Right ventricle myocardium inferior (tissue), 1 donor: ENCODE measurements at regions of chr11 and their contacts with region 1.

Region 1: GRCh38 chr11:1505480-1505879 is 18.9 kb upstream of the MOB2 start:
- DNase-seq: peak; percentile 18
- ATAC-seq: no peak

Region 2: GRCh38 chr11:1276041-1276790 is 229.3 kb before region 1 on chr11:
- intact Hi-C with region 1: loop called (anchors 5 kb)
- DNase-seq: peak; percentile 58
- ATAC-seq: peak; percentile 58

Region 3: DNA sequence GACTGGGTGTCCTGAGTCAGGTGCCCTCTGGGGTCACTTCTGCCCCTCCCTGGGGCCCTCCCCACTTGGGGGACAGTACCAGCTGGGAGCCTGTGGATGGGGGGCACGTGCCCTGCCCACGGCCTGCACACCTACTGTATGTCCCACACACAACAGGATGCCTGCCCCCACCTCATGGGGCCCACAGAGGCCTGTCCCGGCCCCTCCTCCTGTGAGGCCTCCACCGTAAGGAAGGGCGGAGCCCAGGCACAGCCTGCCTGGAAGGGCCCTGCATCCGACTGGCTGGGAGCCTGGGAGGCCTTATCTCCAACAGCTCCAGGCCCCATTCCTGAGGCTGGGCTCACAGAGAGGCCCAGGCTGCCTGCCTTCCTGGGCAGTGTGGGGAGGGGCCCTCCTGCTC is 68.0 kb before region 1 on chr11:
- intact Hi-C with region 1: no loop called
- DNase-seq: no peak
- ATAC-seq: peak; percentile 94

Region 4: GRCh38 chr11:1532014-1532586 is 26.6 kb after region 1 on chr11:
- intact Hi-C with region 1: loop called (anchors 1 kb)
- DNase-seq: peak; percentile 85
- ATAC-seq: peak; percentile 91